ENCODE measurements at regions of chr5 and their contacts with region 1.

Region 1: GRCh38 chr5:79143684-79144379 is 32.2 kb downstream of the BHMT start:
- DNase-seq: peak; percentile 63 to 87
- H3K4me3 ChIP-seq: peak overlapping the region; percentile 21; the same call in 1 of the 2 replicates
- H3K27ac ChIP-seq: peak overlapping the region; percentile 94
- H3K4me1 ChIP-seq: peaks cover 28% of the 10 kb centered on the region
- H3K27me3 ChIP-seq: no peaks in the 10 kb centered on the region
- CTCF ChIP-seq: no peak

Region 2: DNA sequence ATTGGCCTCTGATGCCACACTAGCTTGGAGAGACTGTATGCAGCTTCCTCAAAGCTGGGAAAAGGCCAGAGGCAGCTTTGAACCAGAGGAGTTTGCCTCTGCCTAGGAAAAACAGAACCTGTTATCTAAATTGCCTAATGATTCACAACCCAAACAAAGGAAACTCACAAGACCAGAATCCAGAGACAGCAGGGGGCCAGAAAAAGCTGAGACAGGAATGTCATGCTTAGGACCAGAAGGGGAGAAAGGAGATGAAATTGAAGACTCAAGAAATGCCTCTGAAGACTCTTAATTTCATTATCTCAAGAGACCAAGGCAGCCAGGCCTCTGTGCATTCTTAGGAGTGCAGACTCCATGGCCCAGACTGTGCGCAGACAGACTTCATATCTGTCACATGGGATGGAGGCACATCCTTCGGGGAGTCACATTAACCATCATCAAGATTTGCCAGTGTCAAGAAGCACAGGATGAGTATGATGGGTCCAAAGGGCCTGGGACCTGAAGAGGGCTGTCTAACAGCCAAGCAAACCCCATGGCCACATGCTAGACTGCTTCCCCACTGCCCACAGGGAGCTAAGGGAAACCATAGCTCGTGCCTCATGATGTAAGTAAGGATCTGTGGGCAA is 216.1 kb before region 1 on chr5:
- CTCF ChIA-PET with region 1: no interaction called
- POLR2A ChIA-PET with region 1: no interaction called
- intact Hi-C with region 1: no loop called
- DNase-seq: peak; percentile 16 to 82
- H3K4me3 ChIP-seq: no peak overlapping the region
- H3K27ac ChIP-seq: no peak overlapping the region
- H3K4me1 ChIP-seq: peaks cover 10% of the 10 kb centered on the region
- H3K27me3 ChIP-seq: no peaks in the 10 kb centered on the region
- CTCF ChIP-seq: no peak

Region 3: DNA sequence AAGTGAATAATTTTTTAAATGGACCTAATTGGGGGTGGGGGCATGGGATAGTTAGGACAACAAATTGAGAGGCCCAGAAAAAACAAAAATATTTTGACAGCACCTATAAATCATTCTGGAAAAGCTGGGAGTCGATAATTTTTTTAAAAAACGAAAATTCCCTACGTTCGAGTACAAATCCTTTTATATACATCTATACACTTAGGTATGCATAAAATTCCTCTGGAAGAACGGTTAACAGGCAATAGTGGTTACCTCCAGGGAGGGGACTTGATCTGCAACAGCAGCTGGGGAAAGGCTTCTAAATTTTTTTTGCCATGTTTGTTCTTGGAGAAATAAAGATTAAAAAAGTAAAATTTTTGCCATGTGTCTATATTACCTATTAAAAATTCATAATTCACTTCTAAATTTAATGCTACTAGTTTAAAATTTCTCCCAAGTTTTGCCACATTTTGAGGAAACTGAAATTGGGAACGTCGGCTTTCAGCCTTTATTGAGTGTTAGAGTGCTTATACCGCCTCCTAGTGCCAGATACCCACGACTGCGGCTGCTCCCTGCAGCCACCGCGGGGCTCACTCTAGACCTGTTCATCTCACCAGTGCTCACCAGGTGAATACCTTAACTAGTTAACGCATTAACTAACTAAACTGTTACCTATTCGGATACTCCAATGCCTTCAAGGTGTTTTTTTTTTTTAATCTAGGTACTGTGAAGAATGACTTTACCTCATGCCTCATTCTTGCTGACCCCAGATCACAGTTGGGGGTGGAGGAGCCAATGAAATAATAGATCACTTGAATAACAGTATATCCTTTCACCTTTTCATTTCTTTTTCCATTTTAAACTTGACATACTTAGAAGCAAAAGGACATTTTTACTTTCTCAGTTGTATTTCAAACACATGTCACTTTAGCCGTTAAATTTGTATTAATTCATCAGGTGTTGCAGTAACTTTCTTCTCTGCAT is 34.0 kb before region 1 on chr5:
- CTCF ChIA-PET with region 1: no interaction called
- POLR2A ChIA-PET with region 1: no interaction called
- intact Hi-C with region 1: no loop called
- DNase-seq: no peak
- H3K4me3 ChIP-seq: no peak overlapping the region
- H3K27ac ChIP-seq: no peak overlapping the region
- H3K4me1 ChIP-seq: no peaks in the 10 kb centered on the region
- H3K27me3 ChIP-seq: no peaks in the 10 kb centered on the region
- CTCF ChIP-seq: peak; percentile 39; the same call in 1 of the 2 replicates

Region 4: DNA sequence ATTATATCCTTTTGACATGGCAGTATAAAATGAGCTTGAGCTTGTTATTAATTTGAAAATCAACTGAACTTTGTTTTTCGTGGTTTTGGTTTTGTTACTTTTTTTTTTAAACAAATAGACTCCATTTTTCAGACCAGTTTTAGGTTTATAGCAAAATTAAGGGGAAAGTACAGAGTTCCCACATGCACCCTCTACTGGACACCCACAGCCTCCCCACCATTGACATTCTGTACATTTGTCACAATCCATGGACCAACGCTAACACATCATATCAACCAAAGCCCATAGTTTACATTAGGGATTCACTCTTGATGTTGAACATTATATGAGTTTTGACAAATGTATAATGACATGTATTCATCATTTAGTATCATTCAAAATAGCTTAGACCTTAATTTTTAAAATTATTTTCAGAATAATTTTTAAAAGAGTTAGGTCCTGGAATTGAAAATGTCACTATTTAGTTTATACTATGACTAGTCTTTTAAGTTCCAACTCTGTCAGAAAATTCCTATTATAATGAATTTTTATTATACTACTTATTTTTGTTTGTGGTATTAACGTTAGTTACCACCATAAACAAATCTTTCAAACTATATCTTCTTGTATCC is 56.8 kb after region 1 on chr5:
- CTCF ChIA-PET with region 1: no interaction called
- POLR2A ChIA-PET with region 1: interaction called, 4 read pairs
- intact Hi-C with region 1: loop called (anchors 5 kb)
- DNase-seq: no peak
- H3K4me3 ChIP-seq: no peak overlapping the region
- H3K27ac ChIP-seq: no peak overlapping the region
- H3K4me1 ChIP-seq: peaks cover 16% of the 10 kb centered on the region
- H3K27me3 ChIP-seq: no peaks in the 10 kb centered on the region
- CTCF ChIP-seq: 0 out of 2 replicates have a peak, but pooled peaks have one; percentile 47

Region 5: GRCh38 chr5:79436224-79436623 is 292.4 kb after region 1 on chr5:
- CTCF ChIA-PET with region 1: no interaction called
- POLR2A ChIA-PET with region 1: no interaction called
- intact Hi-C with region 1: no loop called
- DNase-seq: peak in 1 of 2 experiments; percentile 44
- H3K4me3 ChIP-seq: no peak overlapping the region
- H3K27ac ChIP-seq: no peak overlapping the region
- H3K4me1 ChIP-seq: no peaks in the 10 kb centered on the region
- H3K27me3 ChIP-seq: no peaks in the 10 kb centered on the region
- CTCF ChIP-seq: no peak

Measured in PC-9 (cell line).